CD4-positive, alpha-beta memory T cell (primary cell): ENCODE measurements at regions of chr7 and their contacts with region 1.

Region 1: GRCh38 chr7:44748045-44748947 is at the start of gene ZMIZ2:
- DNase-seq: peak; percentile 88 to 98 (median 92)
- H3K4me3 ChIP-seq: peak within 1 kb of the TSS; percentile 44 to 78
- H3K4me3 Mint-ChIP-seq: peak within 1 kb of the TSS; percentile 80 to 95 (median 86)
- H3K27ac ChIP-seq: peak within 1 kb of the TSS; percentile 90
- H3K27ac Mint-ChIP-seq: peak within 1 kb of the TSS; percentile 89 to 98 (median 96)
- H3K4me1 ChIP-seq: peaks cover 44% of the 10 kb centered on the region
- H3K4me1 Mint-ChIP-seq: peaks cover 33 to 51% (median 38%) of the 10 kb centered on the region in 4 donors
- H3K27me3 ChIP-seq: no peaks in the 10 kb centered on the region
- H3K27me3 Mint-ChIP-seq: no peaks in the 10 kb centered on the region
- total RNA-seq, gene ZMIZ2: 169 to 170 TPM

Region 2: DNA sequence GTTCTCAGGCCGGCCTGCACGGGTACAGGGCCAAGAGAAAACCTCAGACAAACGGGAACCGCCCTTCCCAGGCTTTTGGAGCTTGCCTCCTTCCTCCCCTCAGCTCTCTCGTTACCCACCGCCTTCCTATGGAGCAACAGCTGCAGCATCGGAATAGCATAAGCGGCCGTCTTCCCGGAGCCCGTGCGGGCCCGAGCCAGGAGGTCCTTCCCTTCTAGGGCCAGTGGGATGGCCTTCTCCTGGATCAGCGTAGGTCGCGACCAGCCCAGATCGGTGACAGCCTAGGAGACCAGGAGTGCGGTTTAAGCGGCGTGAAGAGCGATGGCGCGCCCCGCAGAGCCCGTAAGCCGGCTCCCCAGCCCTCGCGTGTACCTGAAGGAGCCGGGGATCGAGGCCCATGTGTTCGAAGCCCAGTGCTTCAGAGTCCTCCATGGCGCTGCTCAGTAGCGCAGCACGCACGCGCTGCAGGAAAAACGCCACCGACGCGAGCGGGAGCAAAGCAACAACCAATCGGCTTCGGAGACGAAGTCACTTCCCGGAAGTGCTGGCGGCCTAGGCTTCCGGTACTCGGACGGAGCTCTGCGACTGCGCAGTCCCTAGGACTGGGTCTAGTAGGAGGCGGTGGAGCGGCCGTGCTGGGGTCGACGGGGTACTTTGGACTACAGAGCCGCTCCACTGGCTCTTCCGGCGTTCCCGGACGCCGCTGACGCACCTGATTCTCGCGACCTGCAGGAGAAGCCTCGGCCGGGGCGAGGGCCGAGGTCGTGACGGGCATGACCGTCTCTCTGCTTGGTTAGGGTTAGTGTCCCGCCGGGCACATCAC is 174.6 kb before region 1 on chr7 and contains the start of gene DDX56:
- CTCF ChIA-PET with region 1: no interaction called
- POLR2A ChIA-PET with region 1: interaction called, 4 read pairs
- intact Hi-C with region 1: loop called (anchors 2 kb)
- DNase-seq: peak; percentile 87 to 93 (median 88)
- H3K4me3 ChIP-seq: peak within 1 kb of the TSS; percentile 93
- H3K4me3 Mint-ChIP-seq: peak within 1 kb of the TSS; percentile 94 to 99 (median 96)
- H3K27ac ChIP-seq: peak within 1 kb of the TSS; percentile 94
- H3K27ac Mint-ChIP-seq: peak within 1 kb of the TSS; percentile 97 to 99 (median 99)
- H3K4me1 ChIP-seq: peaks cover 30% of the 10 kb centered on the region
- H3K4me1 Mint-ChIP-seq: peaks cover 26 to 41% (median 34%) of the 10 kb centered on the region in 4 donors
- H3K27me3 ChIP-seq: no peaks in the 10 kb centered on the region
- H3K27me3 Mint-ChIP-seq: no peaks in the 10 kb centered on the region
- total RNA-seq, gene DDX56: 109 to 114 TPM

Region 3: GRCh38 chr7:44581879-44582603 is 166.3 kb before region 1 on chr7 and contains the start of gene TMED4:
- CTCF ChIA-PET with region 1: no interaction called
- POLR2A ChIA-PET with region 1: interaction called, 18 read pairs
- intact Hi-C with region 1: loop called (anchors 2 kb)
- DNase-seq: peak; percentile 100
- H3K4me3 ChIP-seq: peak within 1 kb of the TSS; percentile 79 to 98
- H3K4me3 Mint-ChIP-seq: peak within 1 kb of the TSS; percentile 90 to 95 (median 92)
- H3K27ac ChIP-seq: peak within 1 kb of the TSS; percentile 89
- H3K27ac Mint-ChIP-seq: peak within 1 kb of the TSS; percentile 97 to 99 (median 98)
- H3K4me1 ChIP-seq: peaks cover 34% of the 10 kb centered on the region
- H3K4me1 Mint-ChIP-seq: peaks cover 18 to 44% (median 32%) of the 10 kb centered on the region in 4 donors
- H3K27me3 ChIP-seq: no peaks in the 10 kb centered on the region
- H3K27me3 Mint-ChIP-seq: no peaks in the 10 kb centered on the region
- total RNA-seq, gene TMED4: 108 to 110 TPM

Region 4: GRCh38 chr7:44769776-44770662 is 21.7 kb after region 1 on chr7:
- CTCF ChIA-PET with region 1: no interaction called
- POLR2A ChIA-PET with region 1: interaction called, 16 read pairs
- intact Hi-C with region 1: loop called (anchors 2 kb)
- DNase-seq: peak in 3 of 5 donors; percentile 20 to 49 (median 22)
- H3K4me3 ChIP-seq: no peak overlapping the region
- H3K4me3 Mint-ChIP-seq: peak overlapping the region in 7 of 8 donors; percentile 25 to 74 (median 61)
- H3K27ac ChIP-seq: peak overlapping the region; percentile 33
- H3K27ac Mint-ChIP-seq: peak overlapping the region; percentile 76 to 95 (median 87)
- H3K4me1 ChIP-seq: peaks cover 41% of the 10 kb centered on the region
- H3K4me1 Mint-ChIP-seq: peaks cover 17 to 50% (median 38%) of the 10 kb centered on the region in 4 donors
- H3K27me3 ChIP-seq: no peaks in the 10 kb centered on the region
- H3K27me3 Mint-ChIP-seq: no peaks in the 10 kb centered on the region

Region 5: DNA sequence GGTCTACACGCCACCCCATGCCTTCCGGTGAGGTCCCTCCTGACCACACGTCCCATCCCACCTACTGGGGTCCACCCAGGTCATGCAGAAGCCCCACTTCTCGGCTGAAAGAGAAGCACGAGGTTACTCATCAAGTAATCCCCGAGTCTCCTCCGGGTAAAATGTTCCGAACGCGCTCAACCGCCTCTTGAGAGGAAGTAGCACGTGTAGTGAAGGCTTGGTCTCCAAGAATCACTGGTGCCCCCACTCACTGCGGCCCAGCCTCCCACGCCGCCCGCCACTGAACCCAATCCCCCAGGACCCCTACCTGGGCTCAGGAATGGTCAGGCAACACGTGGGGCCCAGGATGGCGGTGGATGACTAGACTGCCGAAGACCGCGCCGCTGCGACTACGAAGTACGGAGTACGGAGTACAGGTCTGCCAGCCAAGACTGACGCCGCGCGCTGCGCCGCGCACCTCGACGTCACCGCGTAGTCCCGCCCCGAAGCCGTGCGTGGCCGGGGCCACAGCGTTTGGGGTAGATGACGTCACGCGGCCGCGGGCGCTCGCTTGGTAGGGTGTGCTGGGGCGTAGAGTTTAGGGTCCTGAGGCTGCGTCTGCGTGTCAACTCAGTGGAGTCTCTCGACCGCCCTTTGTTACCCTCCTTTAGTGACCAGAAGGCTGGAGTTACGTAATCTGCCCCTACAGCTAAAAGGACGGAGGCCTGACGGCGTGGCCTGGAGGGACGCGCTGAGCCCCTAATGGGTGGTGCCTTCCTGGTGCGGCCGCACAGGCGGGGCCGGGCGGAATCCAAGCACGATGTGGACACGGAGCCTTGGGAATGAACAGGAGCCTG is 238.1 kb after region 1 on chr7:
- CTCF ChIA-PET with region 1: no interaction called
- POLR2A ChIA-PET with region 1: no interaction called
- intact Hi-C with region 1: loop called (anchors 5 kb)
- DNase-seq: peak; percentile 94 to 96 (median 95)
- H3K4me3 ChIP-seq: peak overlapping the region; percentile 76 to 82
- H3K4me3 Mint-ChIP-seq: peak overlapping the region; percentile 95 to 98 (median 96)
- H3K27ac ChIP-seq: peak overlapping the region; percentile 98
- H3K27ac Mint-ChIP-seq: peak overlapping the region; percentile 98 to 100 (median 99)
- H3K4me1 ChIP-seq: peaks cover 54% of the 10 kb centered on the region
- H3K4me1 Mint-ChIP-seq: peaks cover 35 to 64% (median 48%) of the 10 kb centered on the region in 4 donors
- H3K27me3 ChIP-seq: no peaks in the 10 kb centered on the region
- H3K27me3 Mint-ChIP-seq: no peaks in the 10 kb centered on the region